IMR-90 (cell line): ENCODE measurements at regions of chr1 and their contacts with region 1.

Region 1: GRCh38 chr1:44631647-44632539 is 42.4 kb downstream of the TMEM53 start:
- DNase-seq: peak; percentile 81
- ATAC-seq: peak; percentile 84
- H3K4me3 ChIP-seq: peak overlapping the region; percentile 93
- H3K27ac ChIP-seq: peak overlapping the region; percentile 94
- H3K4me1 ChIP-seq: peaks cover 16% of the 10 kb centered on the region
- H3K27me3 ChIP-seq: no peaks in the 10 kb centered on the region
- CTCF ChIP-seq: no peak
- POLR2A ChIP-seq: peak; percentile 86
- RAD21 ChIP-seq: no peak

Region 2: GRCh38 chr1:44645476-44646244 is 13.8 kb after region 1 on chr1:
- CTCF ChIA-PET with region 1: no interaction called
- POLR2A ChIA-PET with region 1: interaction called, 6 read pairs
- dilution Hi-C with region 1: no loop called
- in situ Hi-C with region 1: no loop called
- intact Hi-C with region 1: loop called (anchors 1 kb)
- DNase-seq: peak; percentile 73
- ATAC-seq: peak; percentile 43
- H3K4me3 ChIP-seq: no peak overlapping the region
- H3K27ac ChIP-seq: peak overlapping the region; percentile 74
- H3K4me1 ChIP-seq: peaks cover 19% of the 10 kb centered on the region
- H3K27me3 ChIP-seq: no peaks in the 10 kb centered on the region
- CTCF ChIP-seq: no peak
- POLR2A ChIP-seq: no peak
- RAD21 ChIP-seq: no peak